Activated T-helper 1 cell treated with anti-CD3 and anti-CD28 coated beads, Interleukin-12 subunit alpha, Interleukin-12 subunit beta, Interleukin-2, Interleukin-4 antibody, amounts not matched to agents 30 ng/mL and 10 ng/mL and 1 ng/mL, durations not matched to agents 14 hours and 24 hours and 36 hours (primary cell): ENCODE measurements at regions of chr12 and their contacts with region 1.

Region 1: DNA sequence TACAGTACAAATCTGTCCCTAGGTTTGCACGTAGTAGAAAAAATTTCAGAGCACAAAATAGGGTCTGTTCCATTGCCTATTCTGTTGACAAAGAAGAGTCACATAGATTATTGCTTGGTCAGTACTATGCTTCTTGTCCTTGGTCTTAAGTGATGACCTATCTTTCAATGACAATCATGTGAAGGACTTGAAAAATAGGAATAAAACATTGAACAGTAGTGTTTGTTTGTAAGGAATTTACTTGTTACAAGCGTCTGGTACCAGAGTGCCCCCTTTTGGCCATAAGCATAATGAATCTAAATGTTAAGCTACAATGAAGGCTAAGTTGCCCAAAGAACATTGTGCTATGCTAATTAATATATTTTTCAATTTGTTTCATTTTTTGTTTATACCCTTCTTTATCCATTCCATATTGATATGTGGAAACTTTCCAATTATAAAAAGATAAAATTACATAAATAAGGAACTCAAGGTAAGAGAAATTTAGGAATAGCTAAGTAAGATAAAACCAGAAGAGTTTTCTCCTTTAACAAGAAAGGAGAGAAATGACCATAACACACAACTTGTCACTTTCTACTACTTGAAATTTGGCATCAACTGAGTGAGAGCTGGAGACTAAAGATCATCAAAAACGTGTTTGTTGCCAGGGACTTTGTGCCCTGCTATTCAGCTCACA is 204.7 kb downstream of the EPS8 start:
- DNase-seq: no peak
- H3K4me3 Mint-ChIP-seq: no peak overlapping the region
- H3K27ac Mint-ChIP-seq: no peak overlapping the region
- H3K4me1 Mint-ChIP-seq: peaks cover 13% of the 10 kb centered on the region
- H3K27me3 Mint-ChIP-seq: no peaks in the 10 kb centered on the region

Region 2: DNA sequence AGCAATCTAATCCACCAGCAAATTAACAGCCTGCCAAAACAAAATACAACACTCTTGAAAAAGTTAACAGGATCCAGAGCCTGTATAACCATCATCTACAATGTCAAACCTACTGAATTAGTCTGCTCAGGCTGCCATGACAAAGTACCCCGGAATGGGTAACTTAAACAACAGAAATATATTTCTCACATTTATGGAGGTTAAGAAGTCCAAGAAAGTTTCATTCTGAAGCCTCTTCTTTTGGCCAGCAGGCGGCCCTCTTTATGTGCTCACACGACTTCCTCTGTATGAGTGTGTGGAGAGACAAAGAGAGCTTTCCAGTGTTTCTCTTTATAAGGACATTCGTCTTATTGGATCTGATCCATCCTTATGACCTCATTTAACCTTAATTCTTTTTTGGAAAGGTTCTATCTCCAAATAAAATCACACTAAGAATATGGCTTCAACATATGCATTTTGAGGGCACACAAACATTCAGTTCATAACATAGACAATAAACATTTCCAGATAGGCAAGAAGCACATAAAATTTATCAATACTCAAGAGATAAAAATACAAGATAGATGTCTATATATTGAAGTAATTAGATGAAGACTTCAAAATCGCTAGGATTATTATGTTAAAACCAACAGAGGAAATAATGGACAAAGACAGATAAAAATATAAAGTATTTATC is 357.4 kb before region 1 on chr12:
- intact Hi-C with region 1: loop called (anchors 1 kb)
- DNase-seq: no peak
- H3K4me3 Mint-ChIP-seq: no peak overlapping the region
- H3K27ac Mint-ChIP-seq: no peak overlapping the region
- H3K4me1 Mint-ChIP-seq: no peaks in the 10 kb centered on the region
- H3K27me3 Mint-ChIP-seq: peaks cover 27% of the 10 kb centered on the region

Region 3: DNA sequence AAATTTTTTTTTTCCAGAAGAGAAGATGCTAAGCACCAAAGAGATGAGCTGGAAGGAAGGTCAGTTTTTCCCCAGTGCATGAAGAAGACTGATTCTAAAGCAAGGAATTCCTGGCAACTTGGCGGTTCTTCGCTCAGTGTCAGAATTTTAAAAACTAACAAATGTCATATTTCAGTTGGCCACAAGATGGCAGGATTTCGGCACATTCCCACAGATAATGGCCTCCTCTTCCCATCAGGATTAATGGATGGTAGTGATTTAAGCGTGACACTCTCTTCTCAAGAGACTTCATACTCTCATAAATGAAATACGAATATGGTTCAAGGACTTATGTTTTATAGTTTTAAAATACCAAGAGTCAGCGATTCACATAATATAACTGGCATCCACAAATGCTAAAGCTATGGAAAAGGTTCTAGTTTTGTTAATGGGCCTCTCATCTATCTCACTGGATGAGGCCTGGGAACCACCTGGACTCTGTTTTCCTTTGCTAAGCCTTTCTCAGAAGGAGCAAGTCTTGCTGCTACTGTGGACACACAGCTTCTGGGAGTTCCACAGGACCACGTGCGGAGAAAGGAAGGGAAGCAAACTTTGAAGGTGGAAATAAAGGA is 308.3 kb before region 1 on chr12:
- intact Hi-C with region 1: loop called (anchors 1 kb)
- DNase-seq: no peak
- H3K4me3 Mint-ChIP-seq: no peak overlapping the region
- H3K27ac Mint-ChIP-seq: no peak overlapping the region
- H3K4me1 Mint-ChIP-seq: no peaks in the 10 kb centered on the region
- H3K27me3 Mint-ChIP-seq: peaks cover 2% of the 10 kb centered on the region

Region 4: GRCh38 chr12:15719230-15719629 is 134.7 kb after region 1 on chr12:
- intact Hi-C with region 1: no loop called
- DNase-seq: no peak
- H3K4me3 Mint-ChIP-seq: no peak overlapping the region
- H3K27ac Mint-ChIP-seq: no peak overlapping the region
- H3K4me1 Mint-ChIP-seq: no peaks in the 10 kb centered on the region
- H3K27me3 Mint-ChIP-seq: peaks cover 22% of the 10 kb centered on the region

Region 5: DNA sequence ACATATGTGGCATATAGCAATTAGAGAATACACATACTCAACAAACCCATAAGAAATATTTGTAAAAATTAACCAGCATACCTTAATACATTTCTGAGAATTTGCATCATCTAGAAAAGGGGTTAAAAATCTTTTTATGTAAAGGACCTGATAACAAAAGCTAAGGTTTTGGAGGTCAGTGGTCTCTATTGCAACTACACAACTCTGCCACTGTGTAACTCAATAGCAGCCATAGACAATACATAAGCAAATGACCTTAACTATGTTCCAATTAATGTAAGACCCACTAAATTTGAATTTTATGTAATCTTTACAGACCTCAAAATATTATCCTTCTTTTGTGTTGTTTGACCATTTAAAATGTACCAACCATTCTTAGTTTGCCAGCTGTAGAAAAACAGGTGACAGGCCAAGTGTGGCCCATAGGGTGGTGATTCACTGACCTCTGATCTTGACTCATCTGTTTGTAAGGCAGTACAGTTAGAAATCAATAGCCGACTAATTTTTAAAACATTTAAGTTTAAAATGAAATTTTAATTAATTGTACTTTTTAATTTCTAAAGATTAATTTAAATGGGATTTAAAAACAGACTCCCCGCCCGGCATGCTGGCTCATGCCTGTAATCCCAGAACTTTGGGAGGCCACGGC is 212.1 kb after region 1 on chr12:
- intact Hi-C with region 1: no loop called
- DNase-seq: no peak
- H3K4me3 Mint-ChIP-seq: no peak overlapping the region
- H3K27ac Mint-ChIP-seq: no peak overlapping the region
- H3K4me1 Mint-ChIP-seq: no peaks in the 10 kb centered on the region
- H3K27me3 Mint-ChIP-seq: peaks cover 45% of the 10 kb centered on the region